Activated CD4-positive, alpha-beta memory T cell treated with anti-CD3 and anti-CD28 coated beads for 36 hours (primary cell): ENCODE measurements at regions of chr2 and their contacts with region 1.

Region 1: GRCh38 chr2:96407041-96407918 is 71.7 kb downstream of the NCAPH start:
- DNase-seq: peak; percentile 82
- H3K4me3 Mint-ChIP-seq: peak overlapping the region; percentile 8
- H3K27ac Mint-ChIP-seq: peak overlapping the region; percentile 65
- H3K4me1 Mint-ChIP-seq: peaks cover 20% of the 10 kb centered on the region
- H3K27me3 Mint-ChIP-seq: no peaks in the 10 kb centered on the region

Region 2: GRCh38 chr2:96251721-96252292 is 155.5 kb before region 1 on chr2:
- CTCF ChIA-PET with region 1: no interaction called
- POLR2A ChIA-PET with region 1: no interaction called
- intact Hi-C with region 1: no loop called
- DNase-seq: peak; percentile 34
- H3K4me3 Mint-ChIP-seq: no peak overlapping the region
- H3K27ac Mint-ChIP-seq: peak overlapping the region; percentile 81
- H3K4me1 Mint-ChIP-seq: peaks cover 14% of the 10 kb centered on the region
- H3K27me3 Mint-ChIP-seq: no peaks in the 10 kb centered on the region

Region 3: GRCh38 chr2:96431319-96431718 is 24.0 kb after region 1 on chr2:
- CTCF ChIA-PET with region 1: interaction called, 11 read pairs
- POLR2A ChIA-PET with region 1: interaction called, 3 read pairs
- intact Hi-C with region 1: no loop called
- DNase-seq: no peak
- H3K4me3 Mint-ChIP-seq: no peak overlapping the region
- H3K27ac Mint-ChIP-seq: no peak overlapping the region
- H3K4me1 Mint-ChIP-seq: peaks cover 10% of the 10 kb centered on the region
- H3K27me3 Mint-ChIP-seq: peaks cover 13% of the 10 kb centered on the region

Region 4: GRCh38 chr2:96485751-96486651 is 78.7 kb after region 1 on chr2:
- CTCF ChIA-PET with region 1: interaction called, 4 read pairs
- POLR2A ChIA-PET with region 1: no interaction called
- intact Hi-C with region 1: loop called (anchors 5 kb)
- DNase-seq: peak; percentile 93
- H3K4me3 Mint-ChIP-seq: peak overlapping the region; percentile 95
- H3K27ac Mint-ChIP-seq: peak overlapping the region; percentile 99
- H3K4me1 Mint-ChIP-seq: peaks cover 47% of the 10 kb centered on the region
- H3K27me3 Mint-ChIP-seq: no peaks in the 10 kb centered on the region

Region 5: GRCh38 chr2:96509114-96509846 is 102.0 kb after region 1 on chr2:
- CTCF ChIA-PET with region 1: interaction called, 201 read pairs
- POLR2A ChIA-PET with region 1: interaction called, 4 read pairs
- intact Hi-C with region 1: loop called (anchors 1 kb)
- DNase-seq: peak; percentile 83
- H3K4me3 Mint-ChIP-seq: no peak overlapping the region
- H3K27ac Mint-ChIP-seq: no peak overlapping the region
- H3K4me1 Mint-ChIP-seq: peaks cover 30% of the 10 kb centered on the region
- H3K27me3 Mint-ChIP-seq: peaks cover 6% of the 10 kb centered on the region